Psoas muscle (tissue), 8 donors: ENCODE measurements at regions of chr17 and their contacts with region 1.

Region 1: DNA sequence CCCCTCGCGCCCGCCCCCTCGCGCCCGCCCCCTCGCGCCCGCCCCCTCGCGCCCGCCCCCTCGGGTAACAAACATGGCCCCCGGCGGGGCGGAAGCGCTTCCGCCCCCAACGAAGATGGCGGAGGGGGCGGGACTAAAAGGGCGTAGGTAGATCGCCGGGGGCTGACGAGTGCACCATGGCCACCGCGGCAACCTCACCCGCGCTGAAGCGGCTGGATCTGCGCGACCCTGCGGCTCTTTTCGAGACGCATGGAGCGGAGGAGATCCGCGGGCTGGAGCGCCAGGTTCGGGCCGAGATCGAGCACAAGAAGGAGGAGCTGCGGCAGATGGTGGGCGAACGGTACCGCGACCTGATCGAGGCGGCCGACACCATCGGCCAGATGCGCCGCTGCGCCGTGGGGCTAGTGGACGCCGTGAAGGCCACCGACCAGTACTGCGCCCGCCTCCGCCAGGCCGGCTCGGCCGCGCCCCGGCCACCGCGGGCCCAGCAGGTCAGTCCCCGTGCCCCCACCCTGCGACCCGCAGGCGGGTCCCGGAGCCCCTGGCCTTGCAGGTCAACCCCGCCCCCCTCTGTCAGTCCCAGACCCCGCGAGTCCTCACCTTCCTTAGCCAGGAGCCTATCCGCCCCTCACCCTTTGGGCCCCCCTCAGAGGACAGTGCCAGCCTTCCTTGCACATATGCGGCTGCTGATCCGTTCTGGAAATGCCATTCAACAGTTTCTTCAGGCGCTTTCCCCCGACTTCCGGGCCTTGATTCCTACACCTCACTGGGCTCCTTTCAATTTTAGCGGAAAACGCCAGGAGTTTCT is at the start of gene COG1:
- DNase-seq: peak; percentile 90 to 95
- ATAC-seq: peak; percentile 87 to 90 (median 90)
- H3K4me3 ChIP-seq: peak within 1 kb of the TSS; percentile 99
- H3K27ac ChIP-seq: peak within 1 kb of the TSS; percentile 97
- H3K4me1 ChIP-seq: peaks cover 23% of the 10 kb centered on the region
- H3K27me3 ChIP-seq: no peaks in the 10 kb centered on the region
- CTCF ChIP-seq: no peak
- total RNA-seq, gene COG1: 38.8 to 61.9 (median 51.7) TPM

Region 2: DNA sequence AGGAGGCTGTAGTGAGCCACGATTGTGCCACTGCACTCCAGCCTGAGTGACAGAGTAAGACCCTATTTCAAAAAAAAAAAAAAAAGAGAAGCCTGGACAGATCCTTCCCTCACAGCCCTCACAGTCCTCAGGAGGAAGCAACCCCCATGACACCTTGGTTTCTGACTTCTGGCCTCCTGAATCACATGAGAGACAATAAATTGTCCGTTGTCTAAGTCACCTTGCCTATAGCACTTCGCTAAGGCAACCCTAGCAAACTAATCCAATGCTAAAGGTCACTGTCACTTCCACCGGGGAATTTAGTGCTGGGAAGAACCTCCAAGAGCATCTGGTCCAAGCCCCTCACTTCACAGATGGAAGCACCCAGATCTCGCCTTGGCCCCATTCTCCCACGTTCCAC is 81.7 kb before region 1 on chr17:
- intact Hi-C with region 1: no loop called
- DNase-seq: no peak
- ATAC-seq: no peak
- H3K4me3 ChIP-seq: no peak overlapping the region
- H3K27ac ChIP-seq: no peak overlapping the region
- H3K4me1 ChIP-seq: no peaks in the 10 kb centered on the region
- H3K27me3 ChIP-seq: peaks cover 0 to 2% (median 0%) of the 10 kb centered on the region in 3 donors
- CTCF ChIP-seq: no peak

Region 3: GRCh38 chr17:73231841-73232586 is 38.9 kb after region 1 on chr17:
- intact Hi-C with region 1: loop called (anchors 2 kb)
- DNase-seq: peak; percentile 97 to 98
- ATAC-seq: peak; percentile 92 to 95 (median 94)
- H3K4me3 ChIP-seq: peak overlapping the region; percentile 99
- H3K27ac ChIP-seq: peak overlapping the region; percentile 94
- H3K4me1 ChIP-seq: peaks cover 48% of the 10 kb centered on the region
- H3K27me3 ChIP-seq: no peaks in the 10 kb centered on the region
- CTCF ChIP-seq: peak; percentile 42

Region 4: DNA sequence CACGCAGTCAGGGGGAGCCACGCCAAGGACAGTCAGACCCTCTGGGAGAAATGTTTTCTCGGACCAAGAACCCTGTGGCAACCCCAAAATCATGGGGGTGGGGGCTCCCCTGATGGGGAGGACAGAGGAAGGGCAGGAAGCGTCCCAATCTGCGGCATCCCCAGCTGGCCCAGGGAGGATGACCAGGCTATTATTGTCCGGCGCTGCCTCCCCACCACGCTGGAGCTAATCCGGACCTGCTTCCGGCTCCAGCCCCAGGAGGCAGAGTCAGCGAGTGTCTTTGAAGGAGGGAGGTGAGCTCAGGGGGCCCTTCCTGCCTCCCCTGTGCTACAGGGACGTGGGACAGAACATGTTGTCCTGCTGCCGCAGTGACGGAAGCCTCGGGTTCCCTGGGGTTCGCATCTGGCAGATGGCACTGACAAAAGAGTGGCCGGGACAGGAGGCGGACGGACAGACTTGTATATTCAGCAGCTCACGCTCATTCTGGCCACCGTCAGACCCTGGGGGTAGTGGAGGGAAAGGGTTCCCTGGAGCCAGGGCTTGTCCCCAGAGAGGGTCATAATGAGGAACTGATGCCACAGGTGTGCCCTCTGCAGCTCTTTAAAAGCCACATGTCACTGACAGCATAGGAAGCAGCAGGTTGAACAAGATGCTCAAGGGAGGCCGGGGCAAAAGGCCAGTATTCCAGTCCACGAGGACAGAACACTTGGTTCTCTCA is 173.0 kb after region 1 on chr17:
- intact Hi-C with region 1: loop called (anchors 5 kb)
- DNase-seq: peak; percentile 65 to 88
- ATAC-seq: peak; percentile 20 to 73 (median 52)
- H3K4me3 ChIP-seq: no peak overlapping the region
- H3K27ac ChIP-seq: peak overlapping the region; percentile 55
- H3K4me1 ChIP-seq: no peaks in the 10 kb centered on the region
- H3K27me3 ChIP-seq: peaks cover 0 to 7% (median 2%) of the 10 kb centered on the region in 3 donors
- CTCF ChIP-seq: no peak

Region 5: DNA sequence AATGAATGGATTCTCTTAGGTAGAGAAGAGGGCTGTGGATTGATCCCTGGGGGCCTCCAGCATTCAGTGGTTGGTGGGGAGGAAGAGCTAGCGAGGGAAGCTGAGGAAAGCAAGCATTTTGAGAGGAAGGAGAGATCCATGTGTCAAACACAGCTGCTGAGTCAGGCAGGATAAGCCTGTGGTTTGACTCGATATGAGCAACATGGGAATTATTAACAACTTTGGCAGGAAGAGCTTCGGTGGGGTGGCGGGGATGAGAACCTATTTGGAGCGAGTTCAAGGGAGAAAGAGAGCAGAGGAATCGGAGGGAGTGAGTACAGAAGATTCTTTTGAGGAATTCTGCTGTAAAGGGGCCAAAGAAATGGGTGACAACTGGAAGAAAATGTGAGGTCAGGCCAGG is 178.2 kb after region 1 on chr17:
- intact Hi-C with region 1: loop called (anchors 5 kb)
- DNase-seq: no peak
- ATAC-seq: no peak
- H3K4me3 ChIP-seq: no peak overlapping the region
- H3K27ac ChIP-seq: no peak overlapping the region
- H3K4me1 ChIP-seq: no peaks in the 10 kb centered on the region
- H3K27me3 ChIP-seq: peaks cover 0 to 6% (median 0%) of the 10 kb centered on the region in 3 donors
- CTCF ChIP-seq: no peak